HepG2 (cell line): ENCODE measurements at regions of chr12 and their contacts with region 1.

Region 1: GRCh38 chr12:108514973-108515814 is at the start of gene FICD:
- DNase-seq: peak; percentile 97
- ATAC-seq: peak; percentile 89
- H3K4me3 ChIP-seq: peak within 1 kb of the TSS; percentile 65 to 99 (median 88)
- H3K27ac ChIP-seq: peak within 1 kb of the TSS; percentile 54
- H3K4me1 ChIP-seq: peaks cover 21% of the 10 kb centered on the region
- H3K27me3 ChIP-seq: no peaks in the 10 kb centered on the region
- CTCF ChIP-seq: peak; percentile 35
- EP300 ChIP-seq: no peak
- POLR2A ChIP-seq: peak; percentile 45 to 63
- RAD21 ChIP-seq: no peak
- total RNA-seq, gene FICD: 1.1 and 3.0 TPM in 2 replicates

Region 2: DNA sequence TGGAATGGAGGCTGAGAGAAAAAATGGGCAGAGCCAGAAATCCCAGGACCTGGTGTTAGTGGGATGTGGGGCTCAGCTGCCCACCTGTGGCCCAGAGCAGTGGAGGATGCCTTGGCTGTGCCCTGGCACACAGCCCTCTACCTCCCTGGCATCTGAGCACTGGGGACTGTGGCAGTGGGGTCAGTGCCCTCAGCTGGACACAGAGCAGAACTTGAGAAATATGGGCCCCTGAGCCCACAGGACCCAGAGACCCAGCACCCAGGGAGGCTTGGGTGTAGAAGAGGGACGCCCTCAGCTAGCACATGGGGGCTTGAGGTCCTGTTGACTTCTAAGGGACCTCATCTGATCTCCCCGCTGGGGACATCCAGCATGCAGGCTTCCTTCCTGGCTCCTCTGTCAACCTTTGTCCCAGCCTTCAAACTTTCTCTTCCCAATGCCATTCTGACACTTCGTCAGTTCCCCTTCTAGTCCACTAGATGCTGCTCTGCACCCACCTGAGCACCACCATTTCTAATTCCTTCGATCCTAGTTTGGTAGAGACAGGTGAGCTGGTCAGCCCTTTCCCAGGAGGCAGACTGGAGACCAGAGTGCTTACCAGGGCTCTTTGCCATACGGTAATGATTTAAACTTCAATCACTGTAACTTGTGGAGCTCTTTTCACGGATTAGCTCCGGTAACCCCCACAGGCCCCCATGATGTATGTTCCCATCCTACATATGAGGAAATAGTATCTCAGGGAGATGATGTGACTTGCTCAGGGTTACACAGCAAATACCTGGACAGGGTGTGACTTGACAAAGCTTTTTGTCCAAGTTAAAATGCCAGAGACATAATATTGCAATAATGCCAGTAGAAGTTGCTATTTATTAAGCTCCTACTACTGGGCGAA is 597.0 kb before region 1 on chr12:
- CTCF ChIA-PET with region 1: interaction called, 6 read pairs
- POLR2A ChIA-PET with region 1: no interaction called
- in situ Hi-C with region 1: no loop called
- intact Hi-C with region 1: loop called (anchors 1 kb)
- DNase-seq: peak; percentile 23
- ATAC-seq: peak; percentile 91
- H3K4me3 ChIP-seq: no peak overlapping the region
- H3K27ac ChIP-seq: no peak overlapping the region
- H3K4me1 ChIP-seq: no peaks in the 10 kb centered on the region
- H3K27me3 ChIP-seq: no peaks in the 10 kb centered on the region
- CTCF ChIP-seq: peak; percentile 80
- EP300 ChIP-seq: no peak
- POLR2A ChIP-seq: no peak
- RAD21 ChIP-seq: peak; percentile 61

Region 3: DNA sequence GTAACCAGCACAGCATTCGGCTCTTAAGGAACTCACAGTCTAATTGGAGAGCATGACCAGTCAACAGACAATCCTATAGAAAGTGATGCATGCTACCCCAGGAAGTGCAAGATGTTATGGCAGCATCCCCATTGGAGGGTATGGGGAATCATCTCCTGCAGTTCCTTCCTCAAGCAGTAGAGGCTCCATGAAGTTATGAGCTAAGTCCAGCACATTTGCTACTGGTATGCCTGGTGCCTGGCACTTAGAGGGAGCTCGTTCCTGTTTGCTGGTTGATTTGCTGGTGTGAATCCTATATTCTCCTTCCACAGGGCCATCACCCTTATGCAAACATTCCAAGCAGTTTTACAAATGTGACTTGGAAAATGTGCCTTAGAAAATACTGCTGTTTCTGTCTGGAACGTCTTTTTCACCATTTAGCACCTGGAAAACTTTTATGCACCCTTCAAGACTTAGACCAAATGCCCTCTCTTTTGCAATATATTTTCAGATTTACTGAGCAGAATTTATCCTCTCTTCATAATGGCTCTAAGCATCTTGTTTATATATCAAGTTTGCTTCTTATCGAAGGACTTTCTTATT is 522.2 kb before region 1 on chr12:
- CTCF ChIA-PET with region 1: interaction called, 10 read pairs
- POLR2A ChIA-PET with region 1: no interaction called
- in situ Hi-C with region 1: no loop called
- intact Hi-C with region 1: loop called (anchors 2 kb)
- DNase-seq: peak; percentile 49
- ATAC-seq: peak; percentile 98
- H3K4me3 ChIP-seq: no peak overlapping the region
- H3K27ac ChIP-seq: no peak overlapping the region
- H3K4me1 ChIP-seq: no peaks in the 10 kb centered on the region
- H3K27me3 ChIP-seq: no peaks in the 10 kb centered on the region
- CTCF ChIP-seq: peak; percentile 56
- EP300 ChIP-seq: no peak
- POLR2A ChIP-seq: no peak
- RAD21 ChIP-seq: no peak

Region 4: GRCh38 chr12:108302403-108303311 is 212.5 kb before region 1 on chr12:
- CTCF ChIA-PET with region 1: interaction called, 8 read pairs
- POLR2A ChIA-PET with region 1: no interaction called
- in situ Hi-C with region 1: no loop called
- intact Hi-C with region 1: loop called (anchors 2 kb)
- DNase-seq: peak; percentile 84
- ATAC-seq: peak; percentile 96
- H3K4me3 ChIP-seq: peak overlapping the region in 1 of 3 experiments; percentile 25; a peak in 1 of 6 replicates
- H3K27ac ChIP-seq: no peak overlapping the region
- H3K4me1 ChIP-seq: peaks cover 58% of the 10 kb centered on the region
- H3K27me3 ChIP-seq: peaks cover 2 to 28% of the 10 kb centered on the region in 2 experiments; a peak in 3 of 5 replicates
- CTCF ChIP-seq: peak; percentile 88
- EP300 ChIP-seq: no peak
- POLR2A ChIP-seq: no peak
- RAD21 ChIP-seq: peak; percentile 92

Region 5: GRCh38 chr12:108313606-108314351 is 201.4 kb before region 1 on chr12:
- CTCF ChIA-PET with region 1: no interaction called
- POLR2A ChIA-PET with region 1: no interaction called
- in situ Hi-C with region 1: no loop called
- intact Hi-C with region 1: loop called (anchors 2 kb)
- DNase-seq: peak; percentile 99
- ATAC-seq: peak; percentile 95
- H3K4me3 ChIP-seq: peak overlapping the region in 1 of 3 experiments; percentile 48; a peak in 1 of 6 replicates
- H3K27ac ChIP-seq: peak overlapping the region; percentile 97
- H3K4me1 ChIP-seq: peaks cover 76% of the 10 kb centered on the region
- H3K27me3 ChIP-seq: no peaks in the 10 kb centered on the region; a peak in 1 of 5 replicates
- CTCF ChIP-seq: no peak
- EP300 ChIP-seq: peak in 1 of 2 experiments; percentile 93; a peak in 3 of 4 replicates
- POLR2A ChIP-seq: no peak
- RAD21 ChIP-seq: no peak

Region 6: GRCh38 chr12:108484431-108484830 is 30.8 kb before region 1 on chr12:
- CTCF ChIA-PET with region 1: no interaction called
- POLR2A ChIA-PET with region 1: no interaction called
- in situ Hi-C with region 1: no loop called
- intact Hi-C with region 1: no loop called
- DNase-seq: no peak
- ATAC-seq: no peak
- H3K4me3 ChIP-seq: no peak overlapping the region
- H3K27ac ChIP-seq: no peak overlapping the region
- H3K4me1 ChIP-seq: no peaks in the 10 kb centered on the region
- H3K27me3 ChIP-seq: 0 out of 5 replicates have a peak, but pooled peaks cover 1 to 10% of the 10 kb centered on the region in 2 experiments
- CTCF ChIP-seq: no peak
- EP300 ChIP-seq: no peak
- POLR2A ChIP-seq: no peak
- RAD21 ChIP-seq: no peak